ENCODE measurements at regions of chr10 and their contacts with region 1.

Region 1: GRCh38 chr10:71569775-71570588 is 149.6 kb downstream of the C10orf105 start:
- DNase-seq: peak; percentile 67 to 80 (median 72)
- ATAC-seq: peak; percentile 60
- H3K4me3 ChIP-seq: no peak overlapping the region
- H3K27ac ChIP-seq: no peak overlapping the region
- H3K4me1 ChIP-seq: no peaks in the 10 kb centered on the region
- H3K27me3 ChIP-seq: no peaks in the 10 kb centered on the region
- CTCF ChIP-seq: peak; percentile 53 to 84 (median 76)
- POLR2A ChIP-seq: no peak

Region 2: DNA sequence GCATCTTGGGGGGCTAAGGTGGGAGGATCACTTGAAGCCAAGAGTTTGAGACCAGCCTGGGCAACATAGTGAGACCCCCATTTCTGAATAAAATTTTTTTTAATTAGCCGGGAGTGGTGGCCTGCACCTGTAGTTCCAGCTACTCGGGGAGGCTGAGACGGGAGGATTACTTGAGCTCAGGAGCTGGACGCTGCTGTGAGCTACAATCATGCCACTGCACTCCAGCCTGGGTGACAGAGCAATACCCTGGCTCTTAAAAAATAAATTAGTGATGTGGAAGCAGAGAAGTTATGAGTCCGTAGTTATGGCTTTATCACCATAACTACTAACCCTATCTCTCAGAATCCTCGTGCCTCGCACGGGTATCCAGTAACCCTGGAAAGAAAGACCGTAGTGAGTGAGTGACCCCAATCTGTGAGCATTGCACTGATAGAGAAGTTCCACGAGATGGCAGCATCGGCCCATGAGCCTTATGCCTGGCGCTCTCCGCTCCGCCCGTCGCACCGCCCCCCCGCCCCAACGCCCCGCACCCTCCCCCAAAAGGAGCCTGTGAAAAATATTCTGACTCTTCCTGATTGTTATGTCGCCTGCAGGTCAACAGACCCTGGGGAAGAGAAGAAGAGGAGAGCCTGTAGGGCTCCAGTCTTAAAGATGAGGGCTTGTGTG is 255.8 kb before region 1 on chr10:
- intact Hi-C with region 1: loop called (anchors 5 kb)
- DNase-seq: peak; percentile 45 to 61 (median 55)
- ATAC-seq: no peak
- H3K4me3 ChIP-seq: no peak overlapping the region
- H3K27ac ChIP-seq: no peak overlapping the region
- H3K4me1 ChIP-seq: peaks cover 7% of the 10 kb centered on the region
- H3K27me3 ChIP-seq: no peaks in the 10 kb centered on the region
- CTCF ChIP-seq: peak; percentile 70 to 86 (median 72)
- POLR2A ChIP-seq: no peak

Region 3: DNA sequence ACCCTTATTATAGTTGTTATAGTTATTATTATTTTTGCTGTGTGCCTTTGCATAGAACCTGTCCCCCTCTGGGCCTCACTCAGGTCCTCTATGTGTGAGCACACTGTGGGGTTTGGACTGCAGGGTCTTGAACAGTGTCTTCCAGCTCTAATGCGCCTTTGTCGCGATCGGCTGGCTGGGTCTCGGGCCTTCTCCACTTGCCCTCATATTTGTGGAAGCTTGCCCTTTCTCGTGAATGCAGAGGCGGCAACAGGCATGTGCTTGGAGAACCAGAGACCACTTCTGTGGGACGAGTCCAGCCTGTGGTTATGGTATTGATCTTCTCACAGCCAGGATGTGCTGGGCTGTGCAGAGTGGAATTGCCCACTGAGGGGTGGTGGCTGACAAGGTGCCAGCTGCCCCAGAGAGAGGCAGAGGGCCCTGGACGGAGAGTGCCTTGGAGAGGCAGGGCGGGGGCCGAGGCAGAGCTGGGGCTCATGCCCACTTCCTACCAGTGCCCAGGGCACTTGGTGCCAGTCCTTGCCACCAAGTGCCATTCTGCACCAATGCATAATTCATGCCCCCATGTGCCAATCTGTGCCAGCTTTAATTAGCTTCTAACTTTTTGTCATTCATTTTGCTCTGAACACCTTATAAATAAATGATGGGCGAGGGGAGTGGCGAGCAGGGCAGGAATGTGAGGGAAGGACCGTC is 180.1 kb before region 1 on chr10:
- intact Hi-C with region 1: loop called (anchors 5 kb)
- DNase-seq: no peak
- ATAC-seq: no peak
- H3K4me3 ChIP-seq: no peak overlapping the region
- H3K27ac ChIP-seq: no peak overlapping the region
- H3K4me1 ChIP-seq: no peaks in the 10 kb centered on the region
- H3K27me3 ChIP-seq: no peaks in the 10 kb centered on the region
- CTCF ChIP-seq: no peak
- POLR2A ChIP-seq: no peak

Region 4: GRCh38 chr10:71396084-71396720 is 173.8 kb before region 1 on chr10:
- intact Hi-C with region 1: loop called (anchors 5 kb)
- DNase-seq: peak; percentile 42 to 65 (median 64)
- ATAC-seq: peak; percentile 72
- H3K4me3 ChIP-seq: no peak overlapping the region
- H3K27ac ChIP-seq: peak overlapping the region; percentile 9 to 62 (median 44)
- H3K4me1 ChIP-seq: peaks cover 15% of the 10 kb centered on the region
- H3K27me3 ChIP-seq: no peaks in the 10 kb centered on the region
- CTCF ChIP-seq: peak in 6 of 7 experiments; percentile 23 to 69 (median 56)
- POLR2A ChIP-seq: no peak

Region 5: DNA sequence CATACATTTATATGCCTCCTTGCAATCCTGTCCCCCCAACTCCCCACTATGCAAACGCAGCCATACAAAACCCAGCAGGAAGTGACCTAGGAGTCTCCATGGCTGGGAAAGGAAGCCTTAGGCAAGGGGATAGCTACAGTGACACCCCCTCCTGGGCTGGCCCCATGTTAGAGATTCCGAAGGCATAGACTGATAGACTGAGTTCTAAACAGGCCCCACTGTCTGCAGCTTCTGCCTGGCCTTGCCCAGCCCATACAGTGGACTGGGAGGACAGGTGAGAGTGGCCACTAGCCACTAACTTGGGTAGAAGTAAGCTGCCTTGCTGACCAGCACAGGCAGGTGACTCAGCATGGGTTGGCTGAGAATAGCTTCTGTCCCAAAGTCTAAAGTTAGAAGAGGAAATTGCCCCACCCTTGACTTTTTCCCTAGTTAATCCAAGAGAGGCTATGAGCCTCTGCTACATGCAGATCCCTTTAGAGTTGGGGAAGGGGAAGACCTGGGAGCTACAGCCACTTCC is 43.3 kb after region 1 on chr10:
- intact Hi-C with region 1: no loop called
- DNase-seq: no peak
- ATAC-seq: no peak
- H3K4me3 ChIP-seq: no peak overlapping the region
- H3K27ac ChIP-seq: no peak overlapping the region
- H3K4me1 ChIP-seq: no peaks in the 10 kb centered on the region
- H3K27me3 ChIP-seq: no peaks in the 10 kb centered on the region
- CTCF ChIP-seq: no peak
- POLR2A ChIP-seq: no peak

Measured in body of pancreas (tissue), 4 donors.